K562 (cell line): ENCODE measurements at regions of chr1 and their contacts with region 1.

Region 1: GRCh38 chr1:37989361-37989930 is 376 bp downstream of the SF3A3 start:
- DNase-seq: peak; percentile 63 to 72 (median 69)
- ATAC-seq: peak; percentile 49
- H3K4me3 ChIP-seq: peak overlapping the region; percentile 82
- H3K27ac ChIP-seq: peak overlapping the region; percentile 76
- H3K4me1 ChIP-seq: peaks cover 9 to 12% of the 10 kb centered on the region in 2 experiments; a peak in 3 of 5 replicates
- H3K27me3 ChIP-seq: no peaks in the 10 kb centered on the region
- CTCF ChIP-seq: no peak
- EP300 ChIP-seq: no peak
- POLR2A ChIP-seq: no peak
- RAD21 ChIP-seq: no peak

Region 2: DNA sequence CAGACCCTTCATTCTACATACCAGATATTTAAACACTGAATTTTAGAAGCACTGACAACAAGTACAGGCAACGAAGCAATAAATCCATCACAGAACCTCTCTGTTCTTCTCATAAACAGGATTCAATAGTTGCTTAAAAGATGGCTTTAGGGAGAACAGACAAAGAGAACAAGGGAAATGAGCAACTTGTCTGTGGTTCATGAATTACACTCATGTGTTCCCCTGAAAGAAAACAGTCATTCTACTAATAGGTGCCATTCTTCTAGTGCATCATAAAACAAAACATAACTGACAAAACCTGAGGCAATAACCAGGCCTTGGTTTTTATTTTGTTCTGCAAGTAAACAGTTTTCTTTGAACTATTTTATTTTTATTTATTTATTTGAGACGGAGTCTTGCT is 400.5 kb before region 1 on chr1:
- CTCF ChIA-PET with region 1: no interaction called
- POLR2A ChIA-PET with region 1: no interaction called
- in situ Hi-C with region 1: no loop called
- intact Hi-C with region 1: no loop called
- DNase-seq: no peak
- ATAC-seq: no peak
- H3K4me3 ChIP-seq: no peak overlapping the region
- H3K27ac ChIP-seq: no peak overlapping the region
- H3K4me1 ChIP-seq: peaks cover 0 to 3% of the 10 kb centered on the region in 2 experiments; a peak in 2 of 5 replicates
- H3K27me3 ChIP-seq: no peaks in the 10 kb centered on the region
- CTCF ChIP-seq: no peak
- EP300 ChIP-seq: no peak
- POLR2A ChIP-seq: 0 out of 2 replicates have a peak, but pooled peaks have one; percentile 19
- RAD21 ChIP-seq: no peak

Region 3: GRCh38 chr1:37741130-37741529 is 248.3 kb before region 1 on chr1:
- CTCF ChIA-PET with region 1: no interaction called
- POLR2A ChIA-PET with region 1: no interaction called
- in situ Hi-C with region 1: no loop called
- intact Hi-C with region 1: no loop called
- DNase-seq: no peak
- ATAC-seq: no peak
- H3K4me3 ChIP-seq: no peak overlapping the region
- H3K27ac ChIP-seq: no peak overlapping the region
- H3K4me1 ChIP-seq: no peaks in the 10 kb centered on the region
- H3K27me3 ChIP-seq: peaks cover 14 to 22% of the 10 kb centered on the region in 2 experiments; a peak in 4 of 5 replicates
- CTCF ChIP-seq: no peak
- EP300 ChIP-seq: no peak
- POLR2A ChIP-seq: no peak
- RAD21 ChIP-seq: no peak

Region 4: GRCh38 chr1:37890378-37891014 is 99.0 kb before region 1 on chr1:
- CTCF ChIA-PET with region 1: interaction called, 14 read pairs
- POLR2A ChIA-PET with region 1: no interaction called
- in situ Hi-C with region 1: no loop called
- intact Hi-C with region 1: no loop called
- DNase-seq: peak; percentile 50 to 67 (median 58)
- ATAC-seq: peak; percentile 84
- H3K4me3 ChIP-seq: no peak overlapping the region
- H3K27ac ChIP-seq: no peak overlapping the region
- H3K4me1 ChIP-seq: peaks cover 0 to 9% of the 10 kb centered on the region in 2 experiments; a peak in 2 of 5 replicates
- H3K27me3 ChIP-seq: no peaks in the 10 kb centered on the region
- CTCF ChIP-seq: peak; percentile 49 to 92 (median 56); a peak in 5 of 6 replicates
- EP300 ChIP-seq: no peak
- POLR2A ChIP-seq: no peak
- RAD21 ChIP-seq: peak; percentile 77 to 83

Region 5: DNA sequence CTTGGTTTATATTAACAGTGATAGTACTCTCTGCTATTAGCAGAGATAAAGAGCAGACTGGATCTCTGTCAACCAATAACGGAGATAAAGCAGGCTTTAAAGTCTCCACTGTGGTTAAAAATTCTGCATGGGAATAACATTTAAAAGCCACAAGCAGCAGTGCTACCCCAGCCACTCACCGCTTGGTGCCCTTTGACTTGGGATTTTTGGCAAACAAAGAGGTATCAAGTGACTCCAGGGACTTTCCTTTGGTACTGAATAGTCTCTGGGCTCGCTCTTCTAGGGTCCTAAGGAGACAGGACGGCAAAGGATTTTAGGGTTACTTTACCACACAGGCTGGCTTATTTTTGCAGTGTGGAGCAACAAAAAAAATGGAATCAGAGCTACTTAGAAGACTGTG is 10.9 kb before region 1 on chr1:
- CTCF ChIA-PET with region 1: no interaction called
- POLR2A ChIA-PET with region 1: interaction called, 11 read pairs
- in situ Hi-C with region 1: no loop called
- intact Hi-C with region 1: no loop called
- DNase-seq: no peak
- ATAC-seq: no peak
- H3K4me3 ChIP-seq: no peak overlapping the region
- H3K27ac ChIP-seq: no peak overlapping the region
- H3K4me1 ChIP-seq: no peaks in the 10 kb centered on the region
- H3K27me3 ChIP-seq: no peaks in the 10 kb centered on the region
- CTCF ChIP-seq: no peak
- EP300 ChIP-seq: no peak
- POLR2A ChIP-seq: no peak
- RAD21 ChIP-seq: no peak

Region 6: DNA sequence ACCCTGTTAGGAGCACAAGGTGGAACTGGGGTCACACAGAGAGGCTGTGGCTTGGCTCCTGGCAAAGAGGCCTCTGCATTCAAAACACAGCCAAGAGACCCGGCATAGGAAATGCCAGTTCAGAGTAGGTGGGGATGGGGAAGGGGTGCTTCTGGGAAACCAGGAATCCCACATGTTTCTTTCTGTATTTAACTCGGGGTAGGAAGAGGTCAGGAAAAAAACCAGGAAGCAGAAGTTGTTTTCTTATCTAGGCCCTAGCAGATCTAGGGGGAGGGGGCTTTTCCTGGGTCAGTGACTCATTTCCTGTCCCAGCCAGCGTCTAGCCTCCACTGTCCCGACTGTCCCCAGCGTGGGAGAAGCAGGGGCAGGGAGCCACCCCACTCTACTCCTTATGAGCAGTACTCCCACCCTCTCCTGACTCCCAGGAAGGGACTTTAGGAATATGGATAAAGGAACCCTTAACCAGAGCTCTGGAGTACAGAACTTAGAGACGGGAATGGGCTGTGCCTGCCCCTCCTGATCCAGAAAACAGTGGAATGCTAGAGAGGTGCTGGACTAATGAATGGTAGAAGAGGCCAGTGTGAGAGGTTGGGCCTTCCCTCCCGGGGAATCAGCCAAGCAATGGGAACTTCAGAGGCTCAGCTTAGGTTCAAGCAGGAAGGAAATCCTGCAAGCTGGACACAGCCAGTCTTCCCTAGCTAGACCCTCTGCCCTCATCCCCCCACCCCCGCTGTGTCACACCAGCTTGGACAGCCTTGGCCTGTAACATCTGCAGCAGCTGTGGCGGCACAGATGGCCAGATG is 10.2 kb after region 1 on chr1:
- CTCF ChIA-PET with region 1: no interaction called
- POLR2A ChIA-PET with region 1: interaction called, 65 read pairs
- in situ Hi-C with region 1: no loop called
- intact Hi-C with region 1: no loop called
- DNase-seq: peak; percentile 84 to 96 (median 89)
- ATAC-seq: peak; percentile 74
- H3K4me3 ChIP-seq: peak overlapping the region; percentile 65
- H3K27ac ChIP-seq: peak overlapping the region; percentile 96
- H3K4me1 ChIP-seq: peaks cover 51 to 73% of the 10 kb centered on the region in 2 experiments
- H3K27me3 ChIP-seq: no peaks in the 10 kb centered on the region
- CTCF ChIP-seq: no peak
- EP300 ChIP-seq: peak; percentile 98
- POLR2A ChIP-seq: peak; percentile 81
- RAD21 ChIP-seq: 0 out of 4 replicates have a peak, but pooled peaks of 1 of the 2 experiments have one; percentile 2

Region 7: GRCh38 chr1:38012363-38013226 is 23.1 kb after region 1 on chr1 and contains the start of gene UTP11:
- CTCF ChIA-PET with region 1: no interaction called
- POLR2A ChIA-PET with region 1: interaction called, 10 read pairs
- in situ Hi-C with region 1: no loop called
- intact Hi-C with region 1: no loop called
- DNase-seq: peak; percentile 94 to 99 (median 96)
- ATAC-seq: peak; percentile 89
- H3K4me3 ChIP-seq: peak within 1 kb of the TSS; percentile 89
- H3K27ac ChIP-seq: peak within 1 kb of the TSS; percentile 98
- H3K4me1 ChIP-seq: peaks cover 29 to 61% of the 10 kb centered on the region in 2 experiments
- H3K27me3 ChIP-seq: no peaks in the 10 kb centered on the region
- CTCF ChIP-seq: peak in 1 of 3 experiments; percentile 3; a peak in 1 of 6 replicates
- EP300 ChIP-seq: peak; percentile 44; the same call in 1 of the 2 replicates
- POLR2A ChIP-seq: peak; percentile 97
- RAD21 ChIP-seq: no peak
- polyA plus RNA-seq, gene UTP11: 269 to 303 TPM

Region 8: GRCh38 chr1:38018864-38019343 is 29.5 kb after region 1 on chr1:
- CTCF ChIA-PET with region 1: interaction called, 10 read pairs
- POLR2A ChIA-PET with region 1: interaction called, 10 read pairs
- in situ Hi-C with region 1: no loop called
- intact Hi-C with region 1: loop called (anchors 1 kb)
- DNase-seq: peak in 1 of 4 experiments; percentile 51
- ATAC-seq: peak; percentile 64
- H3K4me3 ChIP-seq: no peak overlapping the region
- H3K27ac ChIP-seq: no peak overlapping the region
- H3K4me1 ChIP-seq: peaks cover 6 to 25% of the 10 kb centered on the region in 2 experiments; a peak in 3 of 5 replicates
- H3K27me3 ChIP-seq: no peaks in the 10 kb centered on the region
- CTCF ChIP-seq: peak; percentile 56 to 87 (median 69); a peak in 5 of 6 replicates
- EP300 ChIP-seq: no peak
- POLR2A ChIP-seq: no peak
- RAD21 ChIP-seq: peak; percentile 72 to 75